ENCODE measurements at regions of chr5 and their contacts with region 1.

Region 1: DNA sequence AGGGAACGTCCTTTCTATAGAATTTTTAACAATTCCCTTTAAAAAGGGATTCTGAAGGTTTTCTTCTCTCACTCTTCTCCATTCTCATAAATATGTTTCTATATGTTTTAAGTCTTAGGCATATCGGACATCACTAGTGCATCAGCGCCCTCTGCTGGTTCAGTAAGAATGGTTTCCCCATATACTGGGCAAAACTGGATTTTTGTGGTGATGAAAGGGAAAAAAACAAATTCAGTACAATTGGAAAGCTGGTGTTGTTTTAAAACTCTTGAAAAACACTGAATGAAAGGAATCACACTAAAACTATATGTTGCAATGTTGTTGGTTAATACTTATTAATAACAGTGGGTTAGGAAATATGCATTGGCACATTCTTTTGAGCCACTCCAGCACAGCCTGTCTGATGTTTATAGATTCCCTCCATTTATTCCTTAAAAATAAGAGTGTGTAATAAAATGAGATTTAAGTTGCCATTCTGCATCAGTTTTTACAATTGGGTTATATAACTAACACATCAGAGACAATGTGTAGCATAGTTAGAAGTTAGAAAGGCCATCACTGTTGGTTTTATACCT is 15.8 kb downstream of the CWC27 start:
- ATAC-seq: peak; percentile 63 to 85 (median 72)
- H3K4me3 ChIP-seq: no peak overlapping the region
- H3K27ac ChIP-seq: no peak overlapping the region
- H3K4me1 ChIP-seq: no peaks in the 10 kb centered on the region

Region 2: DNA sequence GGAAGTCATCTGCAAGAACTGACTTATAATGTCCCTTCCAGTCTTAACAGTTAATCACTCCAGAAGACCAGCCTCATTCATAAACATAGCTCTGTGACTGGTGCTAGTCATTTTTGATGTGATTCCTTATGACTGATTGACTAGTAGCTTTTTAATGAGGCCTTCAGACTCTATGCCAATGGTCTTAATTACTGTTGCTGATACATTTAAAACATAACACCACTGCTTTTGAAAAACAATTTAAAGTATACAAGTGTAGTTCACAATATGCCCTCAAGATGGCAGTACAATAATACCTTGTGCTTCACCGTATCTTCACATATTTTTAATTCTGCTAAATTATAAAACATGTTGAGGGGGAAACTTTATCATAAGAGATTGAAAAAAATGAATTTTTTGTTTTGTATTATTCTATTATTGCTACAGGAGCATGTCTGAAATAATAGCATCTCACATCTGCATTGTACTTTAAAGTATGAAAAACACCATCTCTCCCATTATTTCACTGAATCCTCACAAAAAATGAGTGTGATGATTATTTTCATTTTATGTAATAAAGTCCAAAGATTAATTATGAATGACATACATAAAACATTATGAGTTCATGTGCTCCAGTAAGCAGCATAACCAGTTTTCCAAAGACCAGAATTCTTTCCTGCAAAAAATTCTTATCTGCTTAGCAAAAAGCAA is 149.4 kb before region 1 on chr5:
- in situ Hi-C with region 1: loop called in 7 of 9 experiments (anchors 10 to 25 kb)
- ATAC-seq: no peak
- H3K4me3 ChIP-seq: no peak overlapping the region
- H3K27ac ChIP-seq: no peak overlapping the region
- H3K4me1 ChIP-seq: no peaks in the 10 kb centered on the region

Region 3: GRCh38 chr5:64646169-64646568 is 138.4 kb before region 1 on chr5:
- in situ Hi-C with region 1: loop called in 5 of 9 experiments (anchors 10 to 25 kb)
- ATAC-seq: no peak
- H3K4me3 ChIP-seq: no peak overlapping the region
- H3K27ac ChIP-seq: no peak overlapping the region
- H3K4me1 ChIP-seq: no peaks in the 10 kb centered on the region